PC-3 (cell line): ENCODE measurements at regions of chrX and their contacts with region 1.

Region 1: GRCh38 chrX:134782796-134783195 is 124.5 kb upstream of the PLAC1 start:
- DNase-seq: peak; percentile 72
- ATAC-seq: no peak
- H3K4me3 ChIP-seq: no peak overlapping the region
- H3K27ac ChIP-seq: no peak overlapping the region
- H3K4me1 ChIP-seq: no peaks in the 10 kb centered on the region
- H3K27me3 ChIP-seq: no peaks in the 10 kb centered on the region
- CTCF ChIP-seq: peak; percentile 64

Region 2: GRCh38 chrX:134484039-134484438 is 298.8 kb before region 1 on chrX:
- CTCF ChIA-PET with region 1: interaction called, 5 read pairs
- POLR2A ChIA-PET with region 1: no interaction called
- intact Hi-C with region 1: loop called (anchors 2 kb)
- DNase-seq: peak; percentile 81
- ATAC-seq: no peak
- H3K4me3 ChIP-seq: no peak overlapping the region
- H3K27ac ChIP-seq: no peak overlapping the region
- H3K4me1 ChIP-seq: no peaks in the 10 kb centered on the region
- H3K27me3 ChIP-seq: no peaks in the 10 kb centered on the region
- CTCF ChIP-seq: peak; percentile 77

Region 3: GRCh38 chrX:134551376-134552048 is 231.3 kb before region 1 on chrX:
- CTCF ChIA-PET with region 1: no interaction called
- POLR2A ChIA-PET with region 1: interaction called, 10 read pairs
- intact Hi-C with region 1: no loop called
- DNase-seq: peak; percentile 68
- ATAC-seq: no peak
- H3K4me3 ChIP-seq: no peak overlapping the region
- H3K27ac ChIP-seq: no peak overlapping the region
- H3K4me1 ChIP-seq: peaks cover 35% of the 10 kb centered on the region
- H3K27me3 ChIP-seq: no peaks in the 10 kb centered on the region
- CTCF ChIP-seq: no peak

Region 4: DNA sequence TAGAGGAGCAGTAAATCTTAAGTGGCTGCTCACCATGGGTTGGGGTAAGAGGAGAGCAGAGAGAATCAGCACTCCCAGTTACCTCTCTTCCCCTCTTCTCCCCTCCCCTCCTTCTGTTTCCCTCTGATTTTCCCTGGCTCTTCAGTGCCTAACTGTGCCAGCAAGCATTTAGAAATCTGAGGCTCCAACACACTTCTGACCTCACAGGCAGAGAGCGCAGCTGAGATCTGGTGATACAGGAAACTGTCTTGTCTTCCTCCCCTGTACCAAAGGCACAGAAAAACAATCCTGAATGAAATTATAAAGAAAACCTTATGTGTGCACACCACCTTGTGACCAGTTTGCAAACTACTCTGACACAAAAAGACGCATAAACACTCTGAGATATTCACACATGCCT is 125.6 kb after region 1 on chrX:
- CTCF ChIA-PET with region 1: no interaction called
- POLR2A ChIA-PET with region 1: interaction called, 13 read pairs
- intact Hi-C with region 1: loop called (anchors 5 kb)
- DNase-seq: peak; percentile 37
- ATAC-seq: peak; percentile 57
- H3K4me3 ChIP-seq: no peak overlapping the region
- H3K27ac ChIP-seq: no peak overlapping the region
- H3K4me1 ChIP-seq: no peaks in the 10 kb centered on the region
- H3K27me3 ChIP-seq: no peaks in the 10 kb centered on the region
- CTCF ChIP-seq: peak; percentile 57

Region 5: GRCh38 chrX:135003876-135004623 is 221.3 kb after region 1 on chrX:
- CTCF ChIA-PET with region 1: no interaction called
- POLR2A ChIA-PET with region 1: no interaction called
- intact Hi-C with region 1: loop called (anchors 5 kb)
- DNase-seq: peak; percentile 93
- ATAC-seq: peak; percentile 80
- H3K4me3 ChIP-seq: peak overlapping the region; percentile 69
- H3K27ac ChIP-seq: 0 out of 2 replicates have a peak overlapping the region, but pooled peaks have one; percentile 4
- H3K4me1 ChIP-seq: peaks cover 30% of the 10 kb centered on the region
- H3K27me3 ChIP-seq: no peaks in the 10 kb centered on the region
- CTCF ChIP-seq: no peak